Transverse colon (tissue), 4 donors: ENCODE measurements at regions of chr17 and their contacts with region 1.

Region 1: DNA sequence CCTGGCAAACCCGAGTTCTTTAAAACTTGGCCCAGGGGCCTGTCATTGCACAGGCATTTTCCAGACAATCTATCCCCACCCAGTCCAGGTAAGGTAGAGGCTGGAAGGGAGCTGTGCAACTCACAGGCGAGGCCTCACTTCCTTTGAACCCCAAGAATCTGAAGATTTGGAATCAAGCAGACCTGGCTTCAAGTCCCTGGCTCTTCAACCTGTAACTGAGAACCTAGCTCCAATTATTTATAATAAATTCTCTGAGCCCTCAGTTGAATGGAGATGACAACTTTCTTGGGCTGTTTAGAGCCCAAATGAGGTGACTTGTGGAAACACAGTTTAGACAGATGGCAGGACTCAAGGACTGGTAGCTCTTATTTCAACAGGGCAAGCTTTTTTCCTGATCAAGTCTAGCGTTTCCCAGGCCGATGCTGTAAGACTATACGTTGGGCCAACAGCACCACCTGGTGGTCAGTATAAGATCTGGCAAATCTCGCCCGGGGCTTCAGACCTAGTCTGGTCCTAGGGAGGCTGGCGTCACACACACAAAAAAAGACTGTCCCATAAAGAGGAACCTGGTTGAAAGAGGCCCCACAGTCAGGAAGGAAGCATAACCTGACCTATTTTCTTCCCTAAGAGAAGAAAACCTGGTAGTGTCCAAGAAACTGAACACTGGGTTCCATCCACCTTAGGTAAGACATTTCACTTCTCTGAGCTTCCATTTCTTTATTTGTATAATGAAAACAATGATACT is 117.9 kb downstream of the C17orf67 start:
- DNase-seq: peak; percentile 77
- H3K4me3 ChIP-seq: no peak overlapping the region
- H3K27ac ChIP-seq: no peak overlapping the region
- H3K4me1 ChIP-seq: no peaks in the 10 kb centered on the region
- H3K27me3 ChIP-seq: peaks cover 6% of the 10 kb centered on the region
- CTCF ChIP-seq: peak; percentile 67 to 79 (median 72)
- EP300 ChIP-seq: no peak
- POLR2A ChIP-seq: no peak

Region 2: GRCh38 chr17:55845385-55845784 is 870.4 kb before region 1 on chr17:
- in situ Hi-C with region 1: loop called in 1 of 4 experiments (anchors 25 kb)
- intact Hi-C with region 1: loop called (anchors 10 kb)
- DNase-seq: peak; percentile 33
- H3K4me3 ChIP-seq: peak overlapping the region in 1 of 4 donors; percentile 18
- H3K27ac ChIP-seq: no peak overlapping the region
- H3K4me1 ChIP-seq: peaks cover 0 to 7% (median 3%) of the 10 kb centered on the region in 4 donors
- H3K27me3 ChIP-seq: no peaks in the 10 kb centered on the region
- CTCF ChIP-seq: peak; percentile 41 to 57 (median 51)
- EP300 ChIP-seq: no peak
- POLR2A ChIP-seq: no peak

Region 3: GRCh38 chr17:56478836-56479447 is 236.8 kb before region 1 on chr17:
- in situ Hi-C with region 1: loop called in 1 of 4 experiments (anchors 25 kb)
- intact Hi-C with region 1: no loop called
- DNase-seq: no peak
- H3K4me3 ChIP-seq: no peak overlapping the region
- H3K27ac ChIP-seq: no peak overlapping the region
- H3K4me1 ChIP-seq: no peaks in the 10 kb centered on the region
- H3K27me3 ChIP-seq: no peaks in the 10 kb centered on the region
- CTCF ChIP-seq: peak; percentile 22 to 46 (median 29)
- EP300 ChIP-seq: no peak
- POLR2A ChIP-seq: no peak

Region 4: DNA sequence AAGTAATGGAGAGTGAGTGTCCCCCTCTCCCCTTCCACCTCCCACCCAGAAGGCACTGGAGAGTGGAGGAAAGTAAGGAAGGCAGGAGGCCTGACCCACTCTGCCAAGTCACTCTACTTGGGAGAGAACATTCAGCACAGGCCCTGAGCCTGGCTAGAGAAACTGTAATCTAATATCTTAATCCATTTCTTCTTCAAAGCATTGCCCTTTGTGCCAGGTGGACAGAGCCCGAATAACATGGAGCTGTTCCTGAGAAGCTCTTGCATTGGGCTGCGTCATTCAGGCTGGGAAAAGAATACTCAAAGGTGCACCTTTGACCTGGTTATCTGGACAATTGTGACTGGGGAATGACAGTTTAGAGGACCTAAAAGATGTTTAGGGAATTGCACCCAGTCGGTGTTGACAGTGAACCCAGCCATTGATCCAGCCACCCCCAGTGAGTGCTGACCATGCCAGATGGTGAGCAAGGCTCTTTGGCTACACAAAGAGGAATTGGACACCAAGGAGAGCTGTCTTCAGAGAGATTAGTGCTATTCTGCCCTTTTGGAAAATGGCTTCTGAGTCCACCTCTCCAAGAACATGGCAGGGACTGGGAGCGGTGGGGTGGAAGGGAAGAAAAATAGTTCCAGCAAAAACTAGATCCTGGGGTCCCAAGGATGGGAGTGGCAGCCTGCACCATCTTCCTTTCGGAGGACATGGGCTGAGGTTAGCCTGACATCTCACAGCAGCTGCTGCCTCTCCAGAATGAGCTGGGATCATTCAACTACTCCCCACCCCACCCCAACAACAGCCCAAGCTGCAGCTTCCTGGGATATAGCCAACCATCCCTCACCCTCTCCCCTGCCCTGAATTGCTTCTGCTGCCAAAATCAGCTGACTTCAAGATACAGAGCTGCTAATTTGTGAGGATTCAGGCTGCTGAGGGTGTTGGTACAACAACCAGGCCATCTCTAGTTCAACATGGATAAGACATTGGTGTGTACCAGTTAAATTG is 133.9 kb before region 1 on chr17:
- in situ Hi-C with region 1: loop called in 3 of 4 experiments (anchors 10 to 25 kb)
- intact Hi-C with region 1: no loop called
- DNase-seq: no peak
- H3K4me3 ChIP-seq: no peak overlapping the region
- H3K27ac ChIP-seq: no peak overlapping the region
- H3K4me1 ChIP-seq: peaks cover 0 to 6% (median 0%) of the 10 kb centered on the region in 4 donors
- H3K27me3 ChIP-seq: peaks cover 13% of the 10 kb centered on the region
- CTCF ChIP-seq: no peak
- EP300 ChIP-seq: no peak
- POLR2A ChIP-seq: no peak

Region 5: GRCh38 chr17:56592487-56593085 is 123.2 kb before region 1 on chr17:
- in situ Hi-C with region 1: loop called in 3 of 4 experiments (anchors 10 to 25 kb)
- intact Hi-C with region 1: loop called (anchors 2 kb)
- DNase-seq: peak; percentile 41
- H3K4me3 ChIP-seq: peak overlapping the region in 3 of 4 donors; percentile 29 to 63 (median 39)
- H3K27ac ChIP-seq: no peak overlapping the region
- H3K4me1 ChIP-seq: peaks cover 14 to 48% (median 37%) of the 10 kb centered on the region in 4 donors
- H3K27me3 ChIP-seq: peaks cover 95% of the 10 kb centered on the region
- CTCF ChIP-seq: peak; percentile 16 to 94 (median 88)
- EP300 ChIP-seq: no peak
- POLR2A ChIP-seq: no peak